ENCODE measurements at regions of chr10 and their contacts with region 1.

Region 1: DNA sequence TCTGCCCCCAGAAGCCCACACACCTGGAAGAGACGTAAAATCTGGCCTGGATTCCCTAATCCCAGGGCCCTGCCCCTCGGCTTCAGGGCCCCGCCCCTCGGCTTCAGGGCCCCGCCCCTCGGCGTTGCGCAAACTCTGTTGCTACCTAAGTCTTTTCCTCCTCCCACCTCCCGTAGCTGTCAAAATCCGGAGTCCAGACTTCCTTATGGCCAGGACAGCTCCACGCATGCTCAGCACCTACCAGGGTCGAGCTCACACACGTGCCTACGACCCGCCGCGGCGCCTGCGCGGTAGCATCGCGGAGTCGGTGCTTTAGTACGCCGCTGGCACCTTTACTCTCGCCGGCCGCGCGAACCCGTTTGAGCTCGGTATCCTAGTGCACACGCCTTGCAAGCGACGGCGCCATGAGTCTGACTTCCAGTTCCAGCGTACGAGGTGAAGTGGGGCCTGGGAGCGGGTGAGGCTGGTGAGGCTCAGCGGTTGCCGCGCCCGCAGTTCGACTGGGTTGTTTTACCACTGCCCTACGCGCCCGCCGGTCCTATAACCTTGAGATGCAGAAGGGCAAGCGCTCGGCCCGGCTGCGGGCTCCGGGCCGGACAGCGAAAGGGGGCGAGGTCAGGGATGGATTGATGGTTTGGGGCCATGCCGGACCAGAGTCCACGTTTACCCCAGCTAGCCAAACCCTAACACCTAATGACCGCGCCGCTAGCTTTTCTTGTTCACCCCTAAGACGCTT is at the start of gene CISD1:
- DNase-seq: peak; percentile 95 to 98
- H3K4me3 ChIP-seq: peak within 1 kb of the TSS; percentile 84 to 87
- H3K27ac ChIP-seq: peak within 1 kb of the TSS; percentile 96
- H3K4me1 ChIP-seq: peaks cover 0 to 10% of the 10 kb centered on the region in 2 donors
- H3K27me3 ChIP-seq: no peaks in the 10 kb centered on the region
- CTCF ChIP-seq: no peak
- total RNA-seq, gene CISD1: 18.0 TPM

Region 2: GRCh38 chr10:58209669-58210068 is 59.4 kb before region 1 on chr10:
- intact Hi-C with region 1: no loop called
- DNase-seq: no peak
- H3K4me3 ChIP-seq: no peak overlapping the region
- H3K27ac ChIP-seq: no peak overlapping the region
- H3K4me1 ChIP-seq: no peaks in the 10 kb centered on the region
- H3K27me3 ChIP-seq: no peaks in the 10 kb centered on the region
- CTCF ChIP-seq: no peak

Region 3: DNA sequence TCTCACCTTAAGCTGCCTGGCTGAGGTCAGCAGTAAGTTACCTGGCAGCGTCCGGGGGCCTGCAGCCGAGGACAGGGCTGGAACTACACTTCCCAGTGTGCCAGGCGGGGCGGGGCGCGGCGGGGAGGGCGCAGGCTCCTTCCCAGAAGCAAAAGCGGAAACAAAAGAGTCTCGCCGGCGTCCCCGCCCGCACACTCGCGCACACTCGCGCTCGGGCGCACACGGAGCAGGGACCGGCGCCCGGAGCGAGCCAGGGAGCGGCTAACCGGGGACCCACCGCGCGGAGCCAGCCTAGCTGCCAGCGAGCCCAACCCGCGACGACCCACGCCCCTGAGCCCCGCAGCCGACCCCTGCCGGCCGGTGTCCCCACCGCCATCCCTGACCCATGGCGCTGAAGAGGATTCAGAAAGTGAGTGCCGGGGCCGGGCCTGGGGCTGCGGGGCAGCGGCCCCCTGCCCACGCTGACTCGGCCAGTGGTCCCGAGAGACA is 65.8 kb after region 1 on chr10 and contains the start of gene UBE2D1:
- intact Hi-C with region 1: loop called (anchors 5 kb)
- DNase-seq: peak; percentile 45 to 91
- H3K4me3 ChIP-seq: peak within 1 kb of the TSS; percentile 96 to 99
- H3K27ac ChIP-seq: peak within 1 kb of the TSS; percentile 86 to 90
- H3K4me1 ChIP-seq: peaks cover 0 to 8% of the 10 kb centered on the region in 2 donors
- H3K27me3 ChIP-seq: no peaks in the 10 kb centered on the region
- CTCF ChIP-seq: peak in 2 of 3 experiments; percentile 6 to 10
- total RNA-seq, gene UBE2D1: 4.2 TPM

Region 4: GRCh38 chr10:58384999-58385783 is 116.2 kb after region 1 on chr10 and contains the start of gene TFAM:
- intact Hi-C with region 1: loop called (anchors 2 kb)
- DNase-seq: peak; percentile 84 to 98
- H3K4me3 ChIP-seq: peak within 1 kb of the TSS; percentile 67
- H3K27ac ChIP-seq: peak within 1 kb of the TSS; percentile 88 to 93
- H3K4me1 ChIP-seq: peaks cover 0 to 3% of the 10 kb centered on the region in 2 donors
- H3K27me3 ChIP-seq: no peaks in the 10 kb centered on the region
- CTCF ChIP-seq: peak; percentile 39 to 61 (median 53)
- total RNA-seq, gene TFAM: 3.4 TPM

Region 5: GRCh38 chr10:59006511-59007306 is 737.7 kb after region 1 on chr10:
- intact Hi-C with region 1: loop called (anchors 10 kb)
- DNase-seq: peak in 1 of 2 donors; percentile 81
- H3K4me3 ChIP-seq: no peak overlapping the region
- H3K27ac ChIP-seq: peak overlapping the region; percentile 70 to 78
- H3K4me1 ChIP-seq: peaks cover 0 to 22% of the 10 kb centered on the region in 2 donors
- H3K27me3 ChIP-seq: no peaks in the 10 kb centered on the region
- CTCF ChIP-seq: no peak

Measured in ascending aorta (tissue), 2 donors.